ENCODE measurements at regions of chr5 and their contacts with region 1.

Region 1: DNA sequence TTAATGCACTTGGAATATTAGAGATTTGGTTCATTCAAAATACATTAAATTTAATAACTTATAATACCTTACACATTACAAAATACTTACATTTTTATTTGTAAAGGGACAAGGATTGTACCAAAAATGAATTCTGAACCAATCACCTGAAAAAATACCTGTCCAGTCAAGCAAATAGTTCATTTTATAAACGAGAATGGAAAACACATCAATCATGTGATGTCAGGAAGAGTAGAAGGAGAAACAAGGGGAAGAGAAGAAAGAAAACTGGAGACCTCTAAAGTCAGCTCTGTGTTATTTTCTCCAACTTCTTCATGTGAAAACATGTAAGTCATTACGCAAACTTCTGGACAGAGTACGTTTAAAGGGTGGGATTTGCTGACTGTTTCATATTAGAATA is 989.0 kb upstream of the NUDT12 start:
- DNase-seq: no peak
- H3K4me3 ChIP-seq: no peak overlapping the region
- CTCF ChIP-seq: no peak
- POLR2A ChIP-seq: no peak

Region 2: GRCh38 chr5:103315455-103315854 is 1236.2 kb before region 1 on chr5:
- intact Hi-C with region 1: no loop called
- DNase-seq: no peak
- H3K4me3 ChIP-seq: no peak overlapping the region
- CTCF ChIP-seq: no peak
- POLR2A ChIP-seq: no peak

Region 3: GRCh38 chr5:106292654-106293053 is 1741.0 kb after region 1 on chr5:
- intact Hi-C with region 1: loop called (anchors 5 kb)
- DNase-seq: no peak
- H3K4me3 ChIP-seq: no peak overlapping the region
- CTCF ChIP-seq: no peak
- POLR2A ChIP-seq: no peak